Activated CD8-positive, alpha-beta T cell treated with anti-CD3 and anti-CD28 coated beads for 36 hours (primary cell): ENCODE measurements at regions of chr3 and their contacts with region 1.

Region 1: GRCh38 chr3:119463171-119464169 is at the start of gene TMEM39A:
- DNase-seq: peak; percentile 99
- ATAC-seq: peak; percentile 90
- H3K4me3 Mint-ChIP-seq: peak within 1 kb of the TSS; percentile 95
- H3K27ac Mint-ChIP-seq: peak within 1 kb of the TSS; percentile 97
- H3K4me1 Mint-ChIP-seq: peaks cover 35% of the 10 kb centered on the region
- H3K27me3 Mint-ChIP-seq: no peaks in the 10 kb centered on the region
- CTCF ChIP-seq: no peak
- total RNA-seq, gene TMEM39A: 26.0 to 30.7 TPM

Region 2: DNA sequence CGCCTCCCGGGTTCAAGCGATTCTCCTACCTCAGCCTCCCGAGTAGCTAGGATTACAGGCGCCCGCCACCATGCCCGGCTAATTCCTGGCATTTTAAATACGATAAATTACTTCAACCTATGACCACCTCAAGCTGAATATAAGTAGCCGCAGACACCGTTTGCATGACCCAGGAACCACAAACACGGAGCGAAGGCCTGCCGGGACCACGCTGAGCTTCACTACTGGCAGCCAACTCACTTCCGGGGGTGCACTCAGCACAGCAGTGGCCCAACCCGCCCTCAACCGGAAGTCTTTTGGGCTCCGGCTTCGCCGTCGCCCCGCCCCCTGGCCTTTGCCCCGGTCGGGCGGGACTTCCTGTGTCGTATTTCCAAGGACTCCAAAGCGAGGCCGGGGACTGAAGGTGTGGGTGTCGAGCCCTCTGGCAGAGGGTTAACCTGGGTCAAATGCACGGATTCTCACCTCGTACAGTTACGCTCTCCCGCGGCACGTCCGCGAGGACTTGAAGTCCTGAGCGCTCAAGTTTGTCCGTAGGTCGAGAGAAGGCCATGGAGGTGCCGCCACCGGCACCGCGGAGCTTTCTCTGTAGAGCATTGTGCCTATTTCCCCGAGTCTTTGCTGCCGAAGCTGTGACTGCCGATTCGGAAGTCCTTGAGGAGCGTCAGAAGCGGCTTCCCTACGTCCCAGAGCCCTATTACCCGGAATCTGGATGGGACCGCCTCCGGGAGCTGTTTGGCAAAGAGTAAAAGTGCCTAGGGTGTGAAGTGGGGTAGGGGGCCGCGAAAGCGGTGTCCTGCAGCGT is 34.9 kb after region 1 on chr3 and contains the start of gene TIMMDC1:
- CTCF ChIA-PET with region 1: interaction called, 6 read pairs
- POLR2A ChIA-PET with region 1: interaction called, 29 read pairs
- intact Hi-C with region 1: loop called (anchors 5 kb)
- DNase-seq: peak; percentile 98
- ATAC-seq: peak; percentile 99
- H3K4me3 Mint-ChIP-seq: peak within 1 kb of the TSS; percentile 99
- H3K27ac Mint-ChIP-seq: peak within 1 kb of the TSS; percentile 96
- H3K4me1 Mint-ChIP-seq: peaks cover 37% of the 10 kb centered on the region
- H3K27me3 Mint-ChIP-seq: no peaks in the 10 kb centered on the region
- CTCF ChIP-seq: no peak
- total RNA-seq, gene TIMMDC1: 105 TPM

Region 3: DNA sequence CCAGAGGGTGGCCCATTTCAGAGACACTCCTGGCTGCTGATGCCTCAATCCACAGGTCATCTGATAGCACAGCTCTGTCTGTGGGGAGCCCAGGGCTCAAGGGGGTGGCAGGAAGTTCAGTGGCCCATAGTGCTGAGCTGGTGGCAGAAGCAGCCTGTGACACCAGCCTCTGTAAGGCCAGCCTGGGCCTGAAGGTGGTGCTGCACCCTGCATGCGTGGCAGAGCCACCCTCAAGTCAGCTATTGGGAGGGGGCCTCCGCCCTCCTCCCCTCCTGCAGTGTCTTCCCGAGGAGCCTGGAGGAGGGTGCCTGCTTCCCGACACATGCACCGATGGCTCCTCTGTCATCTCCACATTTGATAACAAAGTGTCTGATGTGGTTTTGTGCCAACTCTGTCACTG is 137.3 kb after region 1 on chr3:
- CTCF ChIA-PET with region 1: no interaction called
- POLR2A ChIA-PET with region 1: no interaction called
- intact Hi-C with region 1: no loop called
- DNase-seq: peak; percentile 53
- ATAC-seq: peak; percentile 77
- H3K4me3 Mint-ChIP-seq: no peak overlapping the region
- H3K27ac Mint-ChIP-seq: peak overlapping the region; percentile 63
- H3K4me1 Mint-ChIP-seq: peaks cover 29% of the 10 kb centered on the region
- H3K27me3 Mint-ChIP-seq: no peaks in the 10 kb centered on the region
- CTCF ChIP-seq: peak; percentile 32